Psoas muscle (tissue), 8 donors: ENCODE measurements at regions of chr6 and their contacts with region 1.

Region 1: DNA sequence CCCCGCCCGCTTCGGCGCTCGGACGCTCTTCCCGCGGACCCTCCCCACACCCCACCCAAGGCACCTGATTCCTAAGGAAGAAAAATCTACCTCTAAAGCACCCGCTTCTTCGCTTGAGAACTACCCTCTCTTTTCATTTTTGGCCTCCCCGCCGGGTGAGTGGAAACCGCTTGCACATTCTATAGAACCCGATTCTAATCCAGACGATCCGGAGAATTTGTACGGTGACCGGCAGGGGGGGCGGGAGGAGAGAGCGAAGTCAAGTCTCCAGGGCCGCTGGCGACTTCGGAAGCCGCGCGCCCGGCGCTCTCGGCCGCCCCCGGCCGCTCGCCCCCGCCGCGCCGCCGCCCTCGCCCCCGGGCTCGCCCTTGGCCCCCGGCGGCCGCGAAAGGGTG is at the start of gene RBM24:
- DNase-seq: peak; percentile 64 to 74
- ATAC-seq: peak in 3 of 4 donors; percentile 14 to 25 (median 16)
- H3K4me3 ChIP-seq: peak within 1 kb of the TSS; percentile 93
- H3K27ac ChIP-seq: peak within 1 kb of the TSS; percentile 98
- H3K4me1 ChIP-seq: peaks cover 13% of the 10 kb centered on the region
- H3K27me3 ChIP-seq: no peaks in the 10 kb centered on the region
- CTCF ChIP-seq: no peak
- total RNA-seq, gene RBM24: 135 to 248 (median 222) TPM

Region 2: DNA sequence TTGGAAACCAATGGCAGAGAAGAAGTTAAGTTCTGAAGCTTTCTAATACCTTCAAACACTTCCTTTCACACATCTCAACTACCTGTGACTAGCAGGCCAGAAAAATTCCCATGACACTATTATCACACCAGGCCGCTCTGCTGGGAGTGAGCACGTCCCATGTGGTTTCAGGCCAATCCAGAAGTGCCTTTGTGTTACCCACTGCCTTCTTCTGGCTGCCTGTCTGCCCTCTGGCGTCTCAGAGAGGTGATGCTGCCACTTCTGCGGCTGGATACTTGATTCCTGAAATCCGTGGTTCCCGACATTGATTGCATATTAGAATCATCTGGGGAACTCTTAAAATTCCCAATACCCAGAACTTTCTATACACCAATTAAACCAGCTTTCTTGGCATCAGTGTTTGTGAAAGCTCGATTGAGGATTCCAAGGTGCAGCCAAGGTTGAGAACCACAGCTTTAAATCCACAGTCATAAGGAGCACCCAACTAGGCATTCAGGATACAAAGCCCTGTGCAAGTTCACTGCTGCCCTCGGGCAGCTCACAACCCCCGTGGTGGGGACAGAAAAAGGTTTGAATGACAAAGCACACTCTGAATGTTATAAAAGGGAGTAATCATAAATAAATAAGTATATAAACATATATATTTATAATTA is 113.6 kb before region 1 on chr6:
- intact Hi-C with region 1: loop called (anchors 1 to 5 kb)
- DNase-seq: peak; percentile 28 to 63
- ATAC-seq: peak; percentile 64 to 72 (median 68)
- H3K4me3 ChIP-seq: peak overlapping the region; percentile 24
- H3K27ac ChIP-seq: peak overlapping the region; percentile 96
- H3K4me1 ChIP-seq: peaks cover 19% of the 10 kb centered on the region
- H3K27me3 ChIP-seq: no peaks in the 10 kb centered on the region
- CTCF ChIP-seq: peak; percentile 61

Region 3: GRCh38 chr6:17172836-17173470 is 108.1 kb before region 1 on chr6:
- intact Hi-C with region 1: loop called (anchors 1 to 5 kb)
- DNase-seq: no peak
- ATAC-seq: no peak
- H3K4me3 ChIP-seq: no peak overlapping the region
- H3K27ac ChIP-seq: no peak overlapping the region
- H3K4me1 ChIP-seq: peaks cover 19% of the 10 kb centered on the region
- H3K27me3 ChIP-seq: no peaks in the 10 kb centered on the region
- CTCF ChIP-seq: no peak

Region 4: GRCh38 chr6:17212546-17213371 is 68.3 kb before region 1 on chr6:
- intact Hi-C with region 1: loop called in 1 of 2 experiments (anchors 2 kb)
- DNase-seq: peak; percentile 23 to 81
- ATAC-seq: peak; percentile 60 to 81 (median 76)
- H3K4me3 ChIP-seq: peak overlapping the region; percentile 26
- H3K27ac ChIP-seq: peak overlapping the region; percentile 89
- H3K4me1 ChIP-seq: peaks cover 16% of the 10 kb centered on the region
- H3K27me3 ChIP-seq: no peaks in the 10 kb centered on the region
- CTCF ChIP-seq: no peak

Region 5: GRCh38 chr6:17469006-17469832 is 188.1 kb after region 1 on chr6:
- intact Hi-C with region 1: loop called in 1 of 2 experiments (anchors 10 kb)
- DNase-seq: no peak
- ATAC-seq: peak in 2 of 4 donors; percentile 31 to 34
- H3K4me3 ChIP-seq: no peak overlapping the region
- H3K27ac ChIP-seq: peak overlapping the region; percentile 88
- H3K4me1 ChIP-seq: peaks cover 68% of the 10 kb centered on the region
- H3K27me3 ChIP-seq: no peaks in the 10 kb centered on the region
- CTCF ChIP-seq: peak; percentile 48